Natural killer cell (primary cell): ENCODE measurements at regions of chr19 and their contacts with region 1.

Region 1: GRCh38 chr19:53195265-53195903 is 2.2 kb upstream of the ZNF665 start:
- DNase-seq: peak; percentile 70 to 88
- ATAC-seq: peak; percentile 47 to 63 (median 53)
- H3K4me3 ChIP-seq: no peak overlapping the region
- H3K4me3 Mint-ChIP-seq: peak overlapping the region; percentile 7
- H3K27ac ChIP-seq: no peak overlapping the region
- H3K27ac Mint-ChIP-seq: peak overlapping the region; percentile 55 to 97
- H3K4me1 ChIP-seq: peaks cover 27% of the 10 kb centered on the region
- H3K4me1 Mint-ChIP-seq: peaks cover 29 to 34% of the 10 kb centered on the region in 2 donors
- H3K27me3 ChIP-seq: no peaks in the 10 kb centered on the region
- H3K27me3 Mint-ChIP-seq: no peaks in the 10 kb centered on the region
- CTCF ChIP-seq: peak; percentile 91

Region 2: GRCh38 chr19:53123400-53123799 is 72.0 kb before region 1 on chr19:
- intact Hi-C with region 1: no loop called
- DNase-seq: no peak
- ATAC-seq: no peak
- H3K4me3 ChIP-seq: no peak overlapping the region
- H3K4me3 Mint-ChIP-seq: no peak overlapping the region
- H3K27ac ChIP-seq: no peak overlapping the region
- H3K27ac Mint-ChIP-seq: no peak overlapping the region
- H3K4me1 ChIP-seq: no peaks in the 10 kb centered on the region
- H3K4me1 Mint-ChIP-seq: peaks cover 0 to 9% of the 10 kb centered on the region in 2 donors
- H3K27me3 ChIP-seq: no peaks in the 10 kb centered on the region
- H3K27me3 Mint-ChIP-seq: no peaks in the 10 kb centered on the region
- CTCF ChIP-seq: no peak

Region 3: DNA sequence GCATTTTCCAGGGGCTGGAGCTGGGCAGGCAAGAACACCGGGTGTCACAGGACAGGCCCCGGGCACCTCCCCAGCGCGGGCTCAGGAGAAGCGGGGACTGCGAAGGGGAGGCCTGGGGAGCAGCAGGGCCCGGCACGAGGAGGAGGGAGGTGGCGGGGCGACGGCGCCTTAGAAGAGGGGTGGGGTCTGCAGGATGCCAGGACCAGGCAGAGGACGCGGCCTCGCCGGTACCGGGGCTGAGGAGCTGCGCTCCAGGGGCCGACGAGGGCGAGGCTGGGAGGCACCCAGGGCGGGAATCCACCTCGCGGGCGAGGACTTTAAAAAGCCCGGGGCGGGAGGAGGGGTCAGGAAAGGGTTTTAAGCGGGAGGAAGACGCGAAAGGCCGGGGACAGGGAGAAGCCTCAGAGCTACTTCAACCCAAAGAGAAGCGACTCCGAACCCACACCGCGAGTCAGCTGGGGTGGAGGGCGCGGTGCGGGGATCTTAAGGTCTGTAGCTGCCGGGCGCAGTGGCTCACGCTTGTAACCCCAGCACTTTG is 37.2 kb before region 1 on chr19:
- intact Hi-C with region 1: loop called (anchors 1 kb)
- DNase-seq: peak; percentile 25 to 55
- ATAC-seq: peak; percentile 36 to 38 (median 38)
- H3K4me3 ChIP-seq: peak overlapping the region; percentile 75
- H3K4me3 Mint-ChIP-seq: peak overlapping the region; percentile 66
- H3K27ac ChIP-seq: peak overlapping the region; percentile 62
- H3K27ac Mint-ChIP-seq: peak overlapping the region; percentile 53 to 84
- H3K4me1 ChIP-seq: peaks cover 14% of the 10 kb centered on the region
- H3K4me1 Mint-ChIP-seq: peaks cover 23 to 26% of the 10 kb centered on the region in 2 donors
- H3K27me3 ChIP-seq: no peaks in the 10 kb centered on the region
- H3K27me3 Mint-ChIP-seq: peaks cover 0 to 2% of the 10 kb centered on the region in 2 donors
- CTCF ChIP-seq: no peak

Region 4: DNA sequence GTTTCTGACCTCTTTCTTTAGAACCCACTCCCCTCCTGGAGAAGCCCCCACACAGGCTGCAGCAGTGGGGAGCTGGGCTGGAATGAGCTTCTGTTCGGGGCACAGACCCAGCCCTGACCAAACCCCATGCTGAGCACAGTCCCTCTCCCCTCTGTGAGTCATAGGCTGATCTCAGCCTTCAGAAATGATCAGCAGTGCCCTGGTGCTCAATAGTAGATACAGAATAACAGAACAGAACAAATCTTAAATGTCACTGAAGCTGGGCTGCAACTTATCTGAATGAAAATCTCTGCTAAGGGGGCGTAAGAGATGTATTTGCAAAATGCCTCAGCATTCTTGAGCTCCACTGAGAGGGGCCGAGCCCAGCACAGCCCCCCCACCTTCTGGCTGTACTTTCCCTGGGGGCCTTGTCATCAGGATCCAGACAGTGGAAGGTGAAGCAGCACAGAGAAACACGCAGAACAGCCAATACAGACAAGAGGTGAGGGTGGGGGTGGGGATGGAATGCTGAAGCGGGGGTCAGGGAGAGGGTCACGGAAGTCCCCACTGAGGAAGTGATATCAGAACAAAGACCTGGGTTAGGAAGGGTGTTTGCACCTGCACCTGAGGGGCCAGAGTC is 12.1 kb before region 1 on chr19:
- intact Hi-C with region 1: no loop called
- DNase-seq: no peak
- ATAC-seq: no peak
- H3K4me3 ChIP-seq: no peak overlapping the region
- H3K4me3 Mint-ChIP-seq: no peak overlapping the region
- H3K27ac ChIP-seq: no peak overlapping the region
- H3K27ac Mint-ChIP-seq: no peak overlapping the region
- H3K4me1 ChIP-seq: no peaks in the 10 kb centered on the region
- H3K4me1 Mint-ChIP-seq: no peaks in the 10 kb centered on the region
- H3K27me3 ChIP-seq: no peaks in the 10 kb centered on the region
- H3K27me3 Mint-ChIP-seq: no peaks in the 10 kb centered on the region
- CTCF ChIP-seq: no peak

Region 5: DNA sequence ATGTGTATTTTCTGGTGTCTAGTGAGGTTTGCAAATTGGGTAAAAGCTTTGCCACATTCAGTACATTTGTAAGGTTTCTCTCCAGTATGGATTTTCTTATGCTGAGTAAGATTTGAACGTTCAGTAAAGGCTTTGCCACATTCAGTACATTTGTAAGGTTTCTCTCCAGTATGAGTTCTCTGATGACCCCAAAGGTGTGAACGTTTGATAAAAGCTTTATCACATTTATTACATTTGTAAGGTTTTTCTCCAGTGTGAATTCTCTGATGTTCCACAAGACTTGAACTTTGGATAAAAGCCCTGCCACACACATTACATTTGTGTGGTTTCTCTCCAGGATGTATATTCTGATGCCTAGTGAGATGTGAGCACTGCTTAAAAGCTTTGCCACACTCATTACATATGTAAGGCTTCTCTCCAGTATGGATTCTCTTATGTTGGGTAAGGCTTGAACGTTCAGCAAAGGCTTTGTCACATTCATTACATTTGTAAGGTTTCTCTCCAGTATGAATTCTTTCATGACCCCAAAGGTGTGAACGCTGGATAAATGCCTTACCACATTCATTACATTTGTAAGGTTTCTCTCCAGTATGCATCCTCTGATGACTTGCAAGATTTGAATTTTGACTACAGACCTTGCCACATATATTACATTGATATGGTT is 41.9 kb after region 1 on chr19:
- intact Hi-C with region 1: no loop called
- DNase-seq: no peak
- ATAC-seq: no peak
- H3K4me3 ChIP-seq: no peak overlapping the region
- H3K4me3 Mint-ChIP-seq: no peak overlapping the region
- H3K27ac ChIP-seq: no peak overlapping the region
- H3K27ac Mint-ChIP-seq: no peak overlapping the region
- H3K4me1 ChIP-seq: no peaks in the 10 kb centered on the region
- H3K4me1 Mint-ChIP-seq: no peaks in the 10 kb centered on the region
- H3K27me3 ChIP-seq: no peaks in the 10 kb centered on the region
- H3K27me3 Mint-ChIP-seq: no peaks in the 10 kb centered on the region
- CTCF ChIP-seq: no peak

Region 6: DNA sequence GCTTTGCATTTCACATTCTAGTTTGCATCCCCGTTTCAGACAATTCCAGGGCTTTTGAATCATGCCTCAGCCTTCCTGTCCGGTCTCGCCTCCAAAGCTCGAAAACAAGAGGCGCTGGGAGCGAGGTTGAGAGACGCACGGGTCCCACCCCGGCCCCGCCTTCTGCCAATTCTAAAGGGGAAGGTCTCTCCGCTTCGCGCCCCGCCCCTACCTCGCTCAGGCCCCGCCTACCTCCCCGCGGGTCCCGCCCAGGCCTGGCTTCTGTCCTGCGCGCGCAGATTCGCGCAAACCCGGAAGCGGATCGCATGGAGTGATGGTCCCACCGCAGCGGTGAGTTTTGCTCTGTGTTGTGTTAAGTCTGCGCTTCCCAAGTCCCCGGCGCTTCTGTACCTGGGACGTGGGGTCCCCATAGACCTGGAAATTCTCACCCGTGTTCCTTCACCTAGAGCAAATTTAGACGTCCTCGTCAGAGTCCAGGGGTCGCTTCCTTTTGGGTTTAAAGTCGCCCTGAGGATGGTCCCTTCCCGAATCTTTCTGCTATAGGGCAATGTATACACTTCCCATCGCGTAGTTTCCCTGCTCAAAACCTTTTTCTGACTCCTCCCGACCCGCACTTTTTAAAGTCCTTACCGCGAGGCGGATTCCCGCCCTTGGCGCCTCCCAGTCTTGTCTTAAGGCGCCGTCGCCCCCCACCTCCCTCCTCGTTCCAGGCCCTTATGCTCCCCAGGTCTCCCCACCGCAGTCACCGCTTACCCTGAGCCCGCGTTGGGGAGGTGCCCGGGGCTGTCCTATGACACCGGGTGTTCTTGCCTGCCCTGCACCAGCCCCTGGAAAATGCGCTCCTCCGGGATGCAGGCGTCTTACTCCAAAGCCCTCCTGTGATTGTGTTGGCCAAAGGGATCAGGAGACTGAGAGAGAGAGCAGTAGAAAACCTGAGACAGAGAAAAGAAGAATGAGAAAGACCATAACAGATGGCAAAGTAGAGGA is 138.4 kb after region 1 on chr19 and contains the start of gene ZNF845:
- intact Hi-C with region 1: loop called (anchors 10 kb)
- DNase-seq: peak; percentile 95 to 99
- ATAC-seq: peak; percentile 98 to 100 (median 98)
- H3K4me3 ChIP-seq: peak within 1 kb of the TSS; percentile 88
- H3K4me3 Mint-ChIP-seq: peak within 1 kb of the TSS; percentile 95
- H3K27ac ChIP-seq: peak within 1 kb of the TSS; percentile 62
- H3K27ac Mint-ChIP-seq: peak within 1 kb of the TSS; percentile 70 to 90
- H3K4me1 ChIP-seq: peaks cover 23% of the 10 kb centered on the region
- H3K4me1 Mint-ChIP-seq: peaks cover 15 to 25% of the 10 kb centered on the region in 2 donors
- H3K27me3 ChIP-seq: no peaks in the 10 kb centered on the region
- H3K27me3 Mint-ChIP-seq: peaks cover 9 to 16% of the 10 kb centered on the region in 2 donors
- CTCF ChIP-seq: no peak
- total RNA-seq, gene ZNF845: 8.7 to 13.2 (median 9.0) TPM

Region 7: GRCh38 chr19:53357821-53358581 is 162.6 kb after region 1 on chr19:
- intact Hi-C with region 1: no loop called
- DNase-seq: no peak
- ATAC-seq: no peak
- H3K4me3 ChIP-seq: no peak overlapping the region
- H3K4me3 Mint-ChIP-seq: no peak overlapping the region
- H3K27ac ChIP-seq: no peak overlapping the region
- H3K27ac Mint-ChIP-seq: no peak overlapping the region
- H3K4me1 ChIP-seq: no peaks in the 10 kb centered on the region
- H3K4me1 Mint-ChIP-seq: peaks cover 0 to 6% of the 10 kb centered on the region in 2 donors
- H3K27me3 ChIP-seq: no peaks in the 10 kb centered on the region
- H3K27me3 Mint-ChIP-seq: no peaks in the 10 kb centered on the region
- CTCF ChIP-seq: no peak

Region 8: GRCh38 chr19:53394974-53395839 is 199.8 kb after region 1 on chr19 and contains the start of gene ZNF765:
- intact Hi-C with region 1: loop called (anchors 10 kb)
- DNase-seq: peak; percentile 97 to 99
- ATAC-seq: peak; percentile 97 to 99 (median 98)
- H3K4me3 ChIP-seq: peak within 1 kb of the TSS; percentile 74
- H3K4me3 Mint-ChIP-seq: peak within 1 kb of the TSS; percentile 97
- H3K27ac ChIP-seq: peak within 1 kb of the TSS; percentile 62
- H3K27ac Mint-ChIP-seq: peak within 1 kb of the TSS; percentile 90 to 93
- H3K4me1 ChIP-seq: peaks cover 16% of the 10 kb centered on the region
- H3K4me1 Mint-ChIP-seq: peaks cover 19% of the 10 kb centered on the region in 2 donors
- H3K27me3 ChIP-seq: no peaks in the 10 kb centered on the region
- H3K27me3 Mint-ChIP-seq: no peaks in the 10 kb centered on the region
- CTCF ChIP-seq: peak; percentile 57
- total RNA-seq, gene ZNF765: 8.5 to 16.4 (median 11.8) TPM

Region 9: DNA sequence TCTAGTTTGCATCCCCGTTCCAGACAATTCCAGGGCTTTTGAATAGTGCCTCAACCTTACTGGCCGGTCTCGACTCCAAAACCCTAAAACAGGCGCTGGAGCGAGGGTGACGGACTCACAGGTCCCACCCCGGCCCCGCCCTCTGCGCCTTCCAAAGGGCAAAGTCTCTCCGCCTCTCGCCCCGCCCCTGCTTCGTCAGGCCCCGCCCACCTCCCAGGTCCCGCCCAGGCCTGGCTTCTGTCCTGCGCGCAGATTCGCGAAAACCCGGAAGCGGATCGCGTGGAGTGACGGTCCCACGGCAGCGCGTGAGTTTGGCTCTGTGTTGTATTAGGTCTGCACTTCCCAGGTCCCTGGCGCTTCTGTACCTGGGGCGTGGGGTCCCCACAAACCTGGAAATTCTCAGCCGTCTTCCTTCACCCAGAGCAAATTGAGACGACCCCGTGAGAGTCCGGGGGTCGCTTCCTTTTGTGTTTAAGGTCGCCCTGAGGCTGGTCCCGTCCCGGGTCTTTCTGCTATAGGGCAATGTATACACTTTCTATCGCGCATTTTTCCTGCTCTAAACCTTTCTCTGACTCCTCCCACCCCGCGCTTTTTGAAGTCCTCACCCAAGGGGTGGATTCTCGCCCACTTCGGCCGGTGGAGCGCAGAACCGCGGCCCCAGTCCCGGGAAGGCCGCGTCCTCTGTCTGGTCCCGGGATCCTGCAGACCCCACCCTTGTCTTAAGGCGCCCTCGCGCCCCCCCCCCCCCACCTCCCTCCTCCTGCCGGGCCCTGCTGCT is 272.3 kb after region 1 on chr19 and contains the start of gene ZNF813:
- intact Hi-C with region 1: loop called (anchors 10 kb)
- DNase-seq: peak; percentile 92 to 96
- ATAC-seq: peak; percentile 97 to 99 (median 98)
- H3K4me3 ChIP-seq: peak within 1 kb of the TSS; percentile 63
- H3K4me3 Mint-ChIP-seq: peak within 1 kb of the TSS; percentile 88
- H3K27ac ChIP-seq: peak within 1 kb of the TSS; percentile 57
- H3K27ac Mint-ChIP-seq: peak within 1 kb of the TSS; percentile 79 to 87
- H3K4me1 ChIP-seq: peaks cover 14% of the 10 kb centered on the region
- H3K4me1 Mint-ChIP-seq: peaks cover 32 to 33% of the 10 kb centered on the region in 2 donors
- H3K27me3 ChIP-seq: no peaks in the 10 kb centered on the region
- H3K27me3 Mint-ChIP-seq: peaks cover 13 to 17% of the 10 kb centered on the region in 2 donors
- CTCF ChIP-seq: no peak
- total RNA-seq, gene ZNF813: 2.5 to 5.0 (median 3.1) TPM